ENCODE measurements at regions of chr21 and their contacts with region 1.

Region 1: GRCh38 chr21:25925936-25926335 is 191.2 kb downstream of the GABPA start:
- DNase-seq: no peak
- ATAC-seq: peak; percentile 37

Region 2: DNA sequence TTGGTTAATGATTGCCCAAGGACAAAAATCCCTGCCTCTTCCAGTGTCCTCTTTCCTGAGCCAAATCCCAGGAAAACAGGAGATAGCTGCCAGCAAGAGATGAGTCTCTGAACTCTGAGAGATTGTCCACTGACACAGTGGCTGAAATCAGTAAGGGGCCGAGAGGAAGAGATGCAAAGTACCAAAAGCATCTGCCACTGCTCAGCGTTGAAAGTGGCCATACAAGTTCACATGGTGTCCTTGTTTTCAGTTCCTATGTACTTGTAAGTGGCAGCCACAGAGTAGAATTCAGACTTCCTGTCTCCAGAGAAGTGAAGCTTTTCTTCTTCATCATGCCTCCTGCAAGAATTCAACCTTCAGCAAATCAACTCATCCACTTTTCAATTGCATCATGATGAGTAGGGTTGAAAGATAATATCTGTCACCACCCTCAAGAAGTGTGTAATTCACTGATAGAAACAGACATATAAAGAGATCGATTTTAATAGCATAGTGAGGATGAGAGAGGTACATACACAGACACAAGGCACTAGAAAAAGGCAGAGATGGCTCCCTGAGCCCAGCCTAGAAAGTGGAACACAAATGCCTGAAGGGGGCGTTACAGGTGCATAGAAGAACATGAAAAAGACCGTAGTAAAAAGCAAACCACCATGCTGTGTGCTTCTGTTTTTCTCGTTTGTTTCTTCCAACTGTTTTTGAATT is 504.5 kb before region 1 on chr21:
- intact Hi-C with region 1: no loop called
- DNase-seq: no peak
- ATAC-seq: no peak

Region 3: GRCh38 chr21:25535849-25536248 is 390.1 kb before region 1 on chr21:
- intact Hi-C with region 1: no loop called
- DNase-seq: no peak
- ATAC-seq: no peak

Region 4: DNA sequence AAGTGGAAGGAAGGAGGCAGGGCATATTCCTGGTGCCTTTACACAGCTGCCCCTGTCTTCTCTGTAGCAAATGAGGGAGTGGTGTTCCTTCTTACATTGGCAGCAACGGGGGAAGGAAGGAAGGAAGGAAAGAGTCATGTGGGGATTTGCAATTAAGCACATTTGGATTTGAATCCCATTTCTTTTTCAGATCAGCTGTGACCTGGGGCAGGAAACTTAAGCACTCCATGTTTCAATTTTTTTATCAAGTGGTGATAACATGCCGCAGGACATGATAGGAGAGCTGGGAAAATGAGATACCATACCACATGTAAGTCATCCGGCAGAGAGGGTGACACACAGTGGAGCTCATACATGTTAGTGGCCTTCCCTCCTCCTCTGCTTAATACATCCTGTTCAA is 57.8 kb after region 1 on chr21:
- intact Hi-C with region 1: loop called (anchors 5 kb)
- DNase-seq: no peak
- ATAC-seq: peak; percentile 87

Region 5: GRCh38 chr21:26136671-26137070 is 210.7 kb after region 1 on chr21:
- intact Hi-C with region 1: no loop called
- DNase-seq: no peak
- ATAC-seq: no peak

Measured in Right ventricle myocardium inferior (tissue), 1 donor.